Activated T-helper 2 cell treated with anti-CD3 and anti-CD28 coated beads, Interferon-gamma antibody, Interleukin-2, Interleukin-4, amounts not matched to agents 10 μg/mL and 5 μg/mL and 100 μg/mL, durations not matched to agents 14 hours and 24 hours and 36 hours (primary cell): ENCODE measurements at regions of chr6 and their contacts with region 1.

Region 1: GRCh38 chr6:89371849-89372505 is 19.5 kb upstream of the UBE2J1 start:
- DNase-seq: peak; percentile 74
- H3K4me3 Mint-ChIP-seq: no peak overlapping the region
- H3K27ac Mint-ChIP-seq: peak overlapping the region; percentile 47
- H3K4me1 Mint-ChIP-seq: peaks cover 30% of the 10 kb centered on the region
- H3K27me3 Mint-ChIP-seq: no peaks in the 10 kb centered on the region

Region 2: DNA sequence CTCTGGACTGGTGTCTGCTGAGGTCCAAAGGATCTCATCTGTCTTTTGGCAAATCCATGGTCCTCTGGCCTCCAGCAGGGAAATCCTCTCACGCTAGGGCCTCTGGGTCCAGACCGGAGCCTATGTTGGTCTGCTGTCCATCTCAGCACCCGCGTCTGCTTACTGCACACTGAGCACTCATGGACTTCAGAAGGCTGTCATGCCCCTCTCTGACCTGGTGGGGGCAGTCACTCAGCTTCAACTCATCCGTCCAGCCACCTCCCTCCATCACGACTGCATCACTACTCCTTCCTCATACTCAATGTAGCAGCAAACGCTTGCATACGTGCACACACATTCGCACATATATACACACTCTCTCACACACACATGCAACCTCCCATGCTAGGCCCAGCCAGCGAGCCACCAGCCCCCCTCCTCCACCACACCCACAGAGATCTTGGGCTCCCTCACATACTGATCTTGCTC is 90.2 kb before region 1 on chr6:
- intact Hi-C with region 1: loop called (anchors 5 kb)
- DNase-seq: peak; percentile 38
- H3K4me3 Mint-ChIP-seq: no peak overlapping the region
- H3K27ac Mint-ChIP-seq: no peak overlapping the region
- H3K4me1 Mint-ChIP-seq: no peaks in the 10 kb centered on the region
- H3K27me3 Mint-ChIP-seq: no peaks in the 10 kb centered on the region

Region 3: GRCh38 chr6:89412071-89413005 is 40.4 kb after region 1 on chr6 and contains the start of gene RRAGD:
- intact Hi-C with region 1: loop called (anchors 1 kb)
- DNase-seq: peak; percentile 53
- H3K4me3 Mint-ChIP-seq: peak within 1 kb of the TSS; percentile 93
- H3K27ac Mint-ChIP-seq: peak within 1 kb of the TSS; percentile 86
- H3K4me1 Mint-ChIP-seq: peaks cover 16% of the 10 kb centered on the region
- H3K27me3 Mint-ChIP-seq: peaks cover 57% of the 10 kb centered on the region
- total RNA-seq, gene RRAGD: 6.3 and 7.2 TPM in 2 replicates

Region 4: DNA sequence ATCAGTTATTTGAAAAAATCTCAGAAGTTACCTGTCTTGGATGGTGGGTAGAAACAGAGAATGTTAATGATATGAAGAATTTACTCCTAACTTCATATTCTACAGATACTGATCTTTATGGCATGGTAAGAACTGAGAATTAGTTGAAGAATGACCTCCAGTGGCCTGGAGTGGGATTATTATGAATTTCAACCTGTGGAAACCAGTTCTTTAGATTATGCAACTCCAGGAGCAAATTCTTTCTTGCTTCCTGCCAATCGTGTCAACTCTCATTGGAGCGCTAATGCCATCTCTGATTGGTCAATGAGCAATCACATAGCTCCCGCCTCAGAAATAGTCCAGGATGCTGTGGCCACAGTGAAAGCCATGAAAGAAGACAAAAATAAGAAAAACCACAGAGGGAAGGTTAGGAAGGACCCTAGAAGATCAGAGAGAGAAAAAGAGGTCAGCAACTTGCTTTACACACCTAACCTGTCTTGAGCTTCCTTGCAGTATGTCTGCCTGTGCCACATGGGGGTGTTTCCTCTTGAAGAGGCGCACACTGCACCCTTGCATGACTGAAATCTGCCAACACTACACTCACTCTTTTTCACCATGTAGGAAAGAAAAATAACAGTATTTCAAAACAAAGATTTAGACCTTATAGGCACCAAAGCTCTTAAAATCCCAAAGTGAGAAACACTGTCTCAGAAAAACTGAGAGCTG is 226.2 kb after region 1 on chr6:
- intact Hi-C with region 1: loop called (anchors 5 kb)
- DNase-seq: no peak
- H3K4me3 Mint-ChIP-seq: no peak overlapping the region
- H3K27ac Mint-ChIP-seq: no peak overlapping the region
- H3K4me1 Mint-ChIP-seq: peaks cover 29% of the 10 kb centered on the region
- H3K27me3 Mint-ChIP-seq: no peaks in the 10 kb centered on the region

Region 5: GRCh38 chr6:89638320-89639195 is 266.6 kb after region 1 on chr6 and contains the start of gene LYRM2:
- intact Hi-C with region 1: loop called (anchors 1 kb)
- DNase-seq: peak; percentile 89
- H3K4me3 Mint-ChIP-seq: peak within 1 kb of the TSS; percentile 84
- H3K27ac Mint-ChIP-seq: peak within 1 kb of the TSS; percentile 94
- H3K4me1 Mint-ChIP-seq: peaks cover 16% of the 10 kb centered on the region
- H3K27me3 Mint-ChIP-seq: no peaks in the 10 kb centered on the region
- total RNA-seq, gene LYRM2: 28.7 and 30.0 TPM in 2 replicates

Region 6: DNA sequence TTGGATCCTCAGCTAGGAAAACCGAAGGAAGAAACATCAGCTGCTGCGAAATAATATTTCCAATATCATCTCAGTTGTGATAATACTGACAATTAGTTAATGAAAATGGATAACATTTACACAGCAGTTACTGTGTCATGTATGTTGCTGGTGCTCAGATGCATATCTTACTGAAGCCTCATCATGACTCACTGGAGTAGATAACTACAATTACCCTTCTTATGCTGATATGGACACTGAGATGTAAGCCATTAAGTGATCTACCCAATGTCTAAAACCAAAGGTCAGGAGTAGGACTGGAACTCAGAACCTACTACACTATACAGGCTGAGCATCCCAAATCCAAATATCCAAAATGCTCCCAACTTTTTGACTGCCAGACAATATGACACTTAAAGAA is 321.2 kb after region 1 on chr6:
- intact Hi-C with region 1: no loop called
- DNase-seq: no peak
- H3K4me3 Mint-ChIP-seq: no peak overlapping the region
- H3K27ac Mint-ChIP-seq: no peak overlapping the region
- H3K4me1 Mint-ChIP-seq: peaks cover 7% of the 10 kb centered on the region
- H3K27me3 Mint-ChIP-seq: no peaks in the 10 kb centered on the region